Common myeloid progenitor, CD34-positive (primary cell): ENCODE measurements at regions of chr1 and their contacts with region 1.

Region 1: GRCh38 chr1:246608616-246609376 is 42.5 kb downstream of the CNST start:
- DNase-seq: peak; percentile 39 to 64 (median 62)
- H3K4me3 ChIP-seq: no peak overlapping the region
- H3K27ac ChIP-seq: no peak overlapping the region
- H3K4me1 ChIP-seq: peaks cover 4 to 25% (median 11%) of the 10 kb centered on the region in 4 experiments
- H3K27me3 ChIP-seq: no peaks in the 10 kb centered on the region

Region 2: GRCh38 chr1:246597340-246597739 is 11.5 kb before region 1 on chr1:
- CTCF ChIA-PET with region 1: interaction called, 11 read pairs
- POLR2A ChIA-PET with region 1: interaction called, 5 read pairs
- DNase-seq: peak; percentile 66 to 89 (median 87)
- H3K4me3 ChIP-seq: no peak overlapping the region
- H3K27ac ChIP-seq: peak overlapping the region; percentile 72 to 79
- H3K4me1 ChIP-seq: peaks cover 0 to 14% (median 1%) of the 10 kb centered on the region in 4 experiments
- H3K27me3 ChIP-seq: no peaks in the 10 kb centered on the region

Region 3: GRCh38 chr1:246798606-246799515 is 190.1 kb after region 1 on chr1:
- CTCF ChIA-PET with region 1: no interaction called
- POLR2A ChIA-PET with region 1: no interaction called
- DNase-seq: no peak
- H3K4me3 ChIP-seq: no peak overlapping the region
- H3K27ac ChIP-seq: no peak overlapping the region
- H3K4me1 ChIP-seq: peaks cover 0 to 11% (median 3%) of the 10 kb centered on the region in 4 experiments
- H3K27me3 ChIP-seq: no peaks in the 10 kb centered on the region